Mammary epithelial cell (primary cell): ENCODE measurements at regions of chr3 and their contacts with region 1.

Region 1: DNA sequence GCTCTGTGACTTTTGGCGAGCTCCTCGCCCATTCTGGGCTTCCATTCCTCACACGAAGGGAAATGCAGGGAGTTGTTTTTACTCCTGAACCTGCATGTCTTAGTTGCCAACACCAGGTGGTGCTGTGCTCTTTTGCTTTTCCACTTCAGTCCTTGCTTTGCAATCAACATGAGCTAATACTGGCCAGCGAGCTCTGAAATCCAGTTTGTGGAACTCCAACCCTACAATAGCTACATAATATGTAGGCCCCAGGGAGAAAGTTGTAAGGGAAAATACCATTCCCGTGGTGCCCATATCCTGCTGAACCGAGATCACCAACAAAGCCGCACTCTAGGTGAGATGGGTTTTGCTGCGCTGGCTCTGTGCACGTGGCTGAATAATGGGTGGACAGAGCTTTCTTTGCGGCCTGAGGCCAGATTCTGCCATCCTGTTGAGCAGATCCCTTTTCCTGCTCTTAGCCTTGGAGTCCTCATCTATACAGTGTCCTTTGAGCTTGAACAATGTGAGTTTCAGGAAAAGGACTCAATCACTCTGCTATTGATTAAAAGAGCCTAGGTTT is 25.0 kb downstream of the LSM3 start:
- DNase-seq: peak; percentile 66
- H3K4me3 ChIP-seq: no peak overlapping the region
- H3K27ac ChIP-seq: no peak overlapping the region
- H3K4me1 ChIP-seq: peaks cover 48% of the 10 kb centered on the region
- H3K27me3 ChIP-seq: no peaks in the 10 kb centered on the region
- CTCF ChIP-seq: peak; percentile 91 to 93

Region 2: DNA sequence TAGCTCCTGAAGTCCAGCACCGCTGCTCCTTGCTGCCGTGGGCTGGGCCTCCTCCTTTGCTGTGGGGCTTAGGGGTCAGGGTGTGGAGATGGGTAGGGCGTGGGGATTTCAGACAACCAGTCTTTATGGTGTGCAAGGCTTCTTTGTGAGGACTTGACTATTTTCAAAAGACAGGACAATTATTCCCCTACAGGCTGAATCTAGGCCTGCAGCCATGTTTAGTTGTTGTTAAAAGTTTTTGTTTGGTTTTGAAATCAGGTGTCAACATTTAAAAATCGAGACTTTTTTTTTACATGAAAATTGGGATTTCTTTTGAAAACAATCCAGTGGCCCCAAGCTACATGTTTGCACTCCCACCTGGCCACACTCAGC is 1372.8 kb before region 1 on chr3:
- CTCF ChIA-PET with region 1: no interaction called
- dilution Hi-C with region 1: no loop called
- in situ Hi-C with region 1: no loop called
- intact Hi-C with region 1: no loop called
- DNase-seq: no peak
- H3K4me3 ChIP-seq: no peak overlapping the region
- H3K27ac ChIP-seq: no peak overlapping the region
- H3K4me1 ChIP-seq: peaks cover 3% of the 10 kb centered on the region
- H3K27me3 ChIP-seq: no peaks in the 10 kb centered on the region
- CTCF ChIP-seq: peak; percentile 19 to 31

Region 3: DNA sequence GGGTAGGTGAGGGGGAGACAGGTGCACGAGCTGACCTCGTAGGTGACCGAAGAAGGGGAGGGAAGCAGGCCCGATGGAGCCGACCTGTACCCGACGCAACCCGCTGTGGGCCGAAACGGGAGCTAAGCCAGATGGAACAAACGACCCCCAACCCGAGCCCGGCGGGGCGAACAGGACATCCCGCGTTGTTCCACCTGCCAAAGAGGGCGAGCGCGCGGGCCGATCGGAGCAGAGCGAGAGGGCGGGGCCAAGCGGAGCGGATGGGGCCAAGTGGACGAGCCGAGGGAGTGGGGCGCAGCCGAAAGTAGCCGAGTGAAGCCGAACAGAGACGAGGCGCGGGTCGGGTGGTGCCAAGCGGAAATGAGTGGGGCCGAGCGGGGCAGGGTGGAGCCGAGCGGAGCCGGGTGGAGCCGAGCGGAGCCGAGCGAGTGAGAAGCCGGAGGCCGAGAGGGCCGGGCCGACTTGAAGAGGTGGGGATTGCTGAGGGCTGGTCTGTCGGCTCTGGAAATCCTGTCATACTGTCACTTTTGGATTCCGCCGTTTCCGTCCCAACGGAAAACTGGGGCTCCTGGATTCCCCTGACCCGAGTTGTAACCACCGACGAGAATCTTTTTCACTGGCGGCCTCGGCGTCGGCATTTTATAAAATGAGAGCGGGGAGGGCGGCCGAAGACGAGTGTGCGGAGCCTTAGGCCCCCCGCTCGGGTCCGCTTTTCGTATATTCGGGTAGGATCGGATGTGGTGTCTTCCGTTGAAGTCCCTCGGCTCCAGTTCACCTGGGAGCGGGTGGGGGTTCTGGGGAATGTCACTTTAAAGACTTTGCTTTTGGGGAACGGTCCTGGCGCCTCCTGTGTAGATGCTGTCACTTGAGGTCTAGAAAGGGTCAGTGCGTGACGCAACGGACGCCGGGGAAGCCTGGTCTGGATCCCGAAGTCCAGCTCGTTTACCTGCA is 308.2 kb before region 1 on chr3:
- CTCF ChIA-PET with region 1: interaction called, 9 read pairs
- dilution Hi-C with region 1: no loop called
- in situ Hi-C with region 1: no loop called
- intact Hi-C with region 1: loop called (anchors 1 kb)
- DNase-seq: peak; percentile 93
- H3K4me3 ChIP-seq: peak overlapping the region; percentile 55 to 84 (median 63)
- H3K27ac ChIP-seq: peak overlapping the region; percentile 32
- H3K4me1 ChIP-seq: peaks cover 31% of the 10 kb centered on the region
- H3K27me3 ChIP-seq: no peaks in the 10 kb centered on the region
- CTCF ChIP-seq: no peak

Region 4: GRCh38 chr3:14178247-14179113 is 25.1 kb before region 1 on chr3 and contains the starts of genes LSM3 and XPC:
- CTCF ChIA-PET with region 1: interaction called, 4 read pairs
- dilution Hi-C with region 1: no loop called
- in situ Hi-C with region 1: no loop called
- intact Hi-C with region 1: loop called (anchors 2 kb)
- DNase-seq: peak; percentile 98
- H3K4me3 ChIP-seq: peak within 1 kb of the TSS; percentile 92 to 94 (median 93)
- H3K27ac ChIP-seq: peak within 1 kb of the TSS; percentile 94
- H3K4me1 ChIP-seq: peaks cover 36% of the 10 kb centered on the region
- H3K27me3 ChIP-seq: no peaks in the 10 kb centered on the region
- CTCF ChIP-seq: no peak
- total RNA-seq, gene LSM3: 5.0 to 11.7 TPM
- total RNA-seq, gene XPC: 42.5 to 68.2 TPM

Region 5: DNA sequence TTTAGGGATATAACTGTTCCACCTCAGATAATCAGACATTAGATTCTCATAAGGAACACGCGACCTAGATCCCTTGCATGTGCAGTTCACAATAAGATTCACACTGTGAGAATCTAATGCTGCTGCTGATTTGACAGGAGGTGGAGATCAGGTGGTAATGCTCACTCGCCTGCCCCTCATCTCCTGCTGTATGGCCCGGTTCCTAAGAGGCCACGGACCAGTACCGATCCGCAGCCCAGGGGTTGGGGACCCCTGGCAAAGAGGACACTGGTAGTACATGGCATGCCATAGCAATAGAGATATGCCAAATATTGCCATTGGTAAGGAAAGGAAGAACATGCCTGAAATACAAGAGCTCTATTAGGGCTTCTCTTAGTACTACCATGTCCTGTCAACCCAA is 34.8 kb after region 1 on chr3:
- CTCF ChIA-PET with region 1: no interaction called
- dilution Hi-C with region 1: no loop called
- in situ Hi-C with region 1: no loop called
- intact Hi-C with region 1: no loop called
- DNase-seq: no peak
- H3K4me3 ChIP-seq: no peak overlapping the region
- H3K27ac ChIP-seq: no peak overlapping the region
- H3K4me1 ChIP-seq: peaks cover 12% of the 10 kb centered on the region
- H3K27me3 ChIP-seq: no peaks in the 10 kb centered on the region
- CTCF ChIP-seq: no peak

Region 6: DNA sequence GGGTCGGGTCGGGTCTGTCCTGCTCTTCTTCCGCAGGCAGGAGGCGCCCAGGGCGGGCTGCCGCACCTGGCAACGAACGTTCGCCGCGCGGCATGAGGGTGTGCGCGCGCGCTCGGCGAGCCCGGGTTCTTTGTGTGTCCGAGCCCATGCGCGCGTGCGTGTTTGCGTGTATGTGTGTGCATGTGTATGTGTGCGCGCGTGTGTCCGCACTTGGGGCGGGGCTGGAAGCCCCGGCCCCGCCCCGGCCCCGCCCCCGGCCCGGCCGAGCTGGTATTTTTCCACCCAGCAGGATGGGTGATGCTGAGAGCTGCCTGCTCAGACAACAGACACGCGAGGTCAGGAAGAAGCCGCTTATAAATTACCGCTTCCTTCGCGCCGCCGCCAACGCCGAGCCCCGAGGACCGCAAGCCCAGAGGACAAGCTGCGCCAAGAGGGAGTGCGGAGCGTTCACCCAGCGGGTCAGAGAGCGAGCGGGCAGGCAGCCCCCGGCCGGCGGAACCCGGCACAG is 198.8 kb after region 1 on chr3 and contains the start of gene SLC6A6:
- CTCF ChIA-PET with region 1: no interaction called
- dilution Hi-C with region 1: no loop called
- in situ Hi-C with region 1: no loop called
- intact Hi-C with region 1: loop called (anchors 2 kb)
- DNase-seq: peak; percentile 96
- H3K4me3 ChIP-seq: peak within 1 kb of the TSS; percentile 51 to 83 (median 63)
- H3K27ac ChIP-seq: peak within 1 kb of the TSS; percentile 67
- H3K4me1 ChIP-seq: peaks cover 19% of the 10 kb centered on the region
- H3K27me3 ChIP-seq: no peaks in the 10 kb centered on the region
- CTCF ChIP-seq: peak; percentile 25 to 66
- total RNA-seq, gene SLC6A6: 14.8 to 17.7 TPM

Region 7: DNA sequence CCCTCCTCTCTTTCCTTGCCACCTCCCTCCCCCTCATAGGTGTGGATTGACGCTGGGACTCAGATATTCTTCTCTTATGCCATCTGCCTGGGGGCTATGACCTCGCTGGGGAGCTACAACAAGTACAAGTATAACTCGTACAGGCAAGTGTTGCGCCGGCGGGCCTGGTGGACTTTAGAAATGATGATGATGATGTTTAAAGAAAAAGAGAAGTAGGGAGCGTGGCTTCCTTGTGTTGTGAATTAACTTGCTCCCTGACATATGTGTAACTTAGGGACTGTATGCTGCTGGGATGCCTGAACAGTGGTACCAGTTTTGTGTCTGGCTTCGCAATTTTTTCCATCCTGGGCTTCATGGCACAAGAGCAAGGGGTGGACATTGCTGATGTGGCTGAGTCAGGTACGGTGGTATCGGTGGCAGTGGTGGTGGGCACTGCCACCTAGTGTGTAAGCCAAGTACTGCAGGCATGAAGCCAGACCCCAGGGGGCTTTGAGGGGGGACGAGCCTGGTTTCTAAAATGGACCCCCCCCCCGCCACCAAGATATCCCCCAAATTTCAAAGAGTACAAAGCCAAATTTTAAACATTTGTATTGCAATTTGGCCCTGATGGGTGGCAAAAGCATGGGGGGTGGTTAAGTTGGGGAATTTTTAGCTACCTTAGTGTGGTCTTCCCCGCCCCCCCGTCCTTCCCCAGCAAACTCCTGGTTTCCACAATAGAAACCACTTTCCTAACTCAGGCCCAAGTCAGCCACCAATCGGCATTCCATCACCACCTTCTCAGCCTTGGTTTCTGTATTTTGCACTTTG is 264.4 kb after region 1 on chr3:
- CTCF ChIA-PET with region 1: interaction called, 8 read pairs
- dilution Hi-C with region 1: no loop called
- in situ Hi-C with region 1: loop called (anchors 5 to 10 kb)
- intact Hi-C with region 1: loop called (anchors 1 kb)
- DNase-seq: no peak
- H3K4me3 ChIP-seq: no peak overlapping the region
- H3K27ac ChIP-seq: no peak overlapping the region
- H3K4me1 ChIP-seq: peaks cover 9% of the 10 kb centered on the region
- H3K27me3 ChIP-seq: no peaks in the 10 kb centered on the region
- CTCF ChIP-seq: peak; percentile 63 to 78